ENCODE measurements at regions of chr2 and their contacts with region 1.

Region 1: GRCh38 chr2:219029829-219030165 is 11.5 kb downstream of the CFAP65 start:
- DNase-seq: peak; percentile 83
- H3K4me3 Mint-ChIP-seq: no peak overlapping the region
- H3K27ac Mint-ChIP-seq: no peak overlapping the region
- H3K4me1 Mint-ChIP-seq: no peaks in the 10 kb centered on the region
- H3K27me3 Mint-ChIP-seq: peaks cover 18% of the 10 kb centered on the region

Region 2: GRCh38 chr2:218892693-218893348 is 137.0 kb before region 1 on chr2:
- CTCF ChIA-PET with region 1: no interaction called
- intact Hi-C with region 1: no loop called
- DNase-seq: peak; percentile 90
- H3K4me3 Mint-ChIP-seq: peak overlapping the region; percentile 75
- H3K27ac Mint-ChIP-seq: peak overlapping the region; percentile 76
- H3K4me1 Mint-ChIP-seq: peaks cover 45% of the 10 kb centered on the region
- H3K27me3 Mint-ChIP-seq: no peaks in the 10 kb centered on the region

Region 3: DNA sequence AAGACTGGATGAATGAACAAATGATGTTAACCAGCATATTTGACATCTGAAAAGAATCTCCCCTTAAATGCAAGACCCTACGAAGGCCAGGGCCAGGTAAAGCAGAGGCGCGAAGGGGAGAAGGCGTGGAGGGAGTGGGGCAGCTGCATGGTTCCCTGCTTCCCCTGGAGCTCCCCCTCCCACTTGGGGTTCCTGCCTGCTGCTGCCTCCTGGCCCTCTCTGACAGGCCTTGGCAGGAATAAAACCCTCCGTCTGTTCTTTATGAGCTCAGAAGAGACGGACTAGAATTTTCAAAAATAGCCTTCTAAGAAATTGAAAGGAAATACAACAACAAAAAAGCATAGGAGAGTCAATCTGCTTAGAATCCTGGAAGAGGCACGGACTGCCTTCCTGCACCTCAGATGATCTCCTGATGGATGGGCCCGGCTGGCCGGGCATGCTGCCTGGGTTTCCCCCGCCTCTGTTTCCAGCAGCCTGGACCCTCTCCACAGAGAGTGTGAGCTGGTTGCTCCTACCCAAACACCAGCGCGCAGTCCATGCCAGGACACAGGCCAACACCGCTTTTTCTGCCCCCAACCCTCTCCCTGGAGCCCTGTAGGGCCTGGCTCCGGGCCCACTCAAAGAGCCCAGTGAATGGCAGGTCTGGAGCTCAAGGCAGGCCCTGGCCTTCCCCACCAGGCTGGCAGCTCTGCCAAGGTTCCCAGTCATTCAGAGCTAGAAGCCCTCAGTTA is 12.4 kb before region 1 on chr2:
- CTCF ChIA-PET with region 1: interaction called, 16 read pairs
- intact Hi-C with region 1: no loop called
- DNase-seq: no peak
- H3K4me3 Mint-ChIP-seq: no peak overlapping the region
- H3K27ac Mint-ChIP-seq: no peak overlapping the region
- H3K4me1 Mint-ChIP-seq: no peaks in the 10 kb centered on the region
- H3K27me3 Mint-ChIP-seq: peaks cover 6% of the 10 kb centered on the region

Region 4: GRCh38 chr2:219104107-219105035 is 74.6 kb after region 1 on chr2:
- CTCF ChIA-PET with region 1: interaction called, 14 read pairs
- intact Hi-C with region 1: no loop called
- DNase-seq: peak; percentile 45
- H3K4me3 Mint-ChIP-seq: no peak overlapping the region
- H3K27ac Mint-ChIP-seq: no peak overlapping the region
- H3K4me1 Mint-ChIP-seq: peaks cover 29% of the 10 kb centered on the region
- H3K27me3 Mint-ChIP-seq: no peaks in the 10 kb centered on the region

Region 5: GRCh38 chr2:219155054-219155644 is 125.4 kb after region 1 on chr2:
- CTCF ChIA-PET with region 1: interaction called, 72 read pairs
- intact Hi-C with region 1: loop called (anchors 1 kb)
- DNase-seq: peak; percentile 40
- H3K4me3 Mint-ChIP-seq: no peak overlapping the region
- H3K27ac Mint-ChIP-seq: no peak overlapping the region
- H3K4me1 Mint-ChIP-seq: peaks cover 7% of the 10 kb centered on the region
- H3K27me3 Mint-ChIP-seq: no peaks in the 10 kb centered on the region

Measured in activated naive CD4-positive, alpha-beta T cell treated with anti-CD3 and anti-CD28 coated beads for 36 hours (primary cell).